ENCODE measurements at regions of chr6 and their contacts with region 1.

Region 1: DNA sequence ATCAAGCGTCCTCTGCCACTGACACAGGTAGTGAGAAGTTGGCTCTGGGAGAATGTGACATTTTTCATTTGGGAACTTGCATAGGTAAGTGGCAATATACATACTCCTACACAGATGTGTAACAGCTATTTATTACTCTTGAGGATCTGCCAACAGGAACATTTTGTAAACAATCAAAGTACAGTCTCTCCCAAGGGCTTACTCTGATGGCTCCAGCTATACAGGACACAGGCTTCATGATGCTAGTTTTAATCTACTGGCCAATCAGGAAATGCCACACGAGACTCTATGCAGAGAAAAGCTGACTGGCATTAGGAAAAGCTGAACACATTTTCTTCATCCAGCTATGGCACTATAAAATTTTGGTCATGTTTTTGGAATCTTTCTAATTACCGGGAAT is 57.8 kb downstream of the POPDC3 start:
- DNase-seq: no peak
- H3K4me3 Mint-ChIP-seq: no peak overlapping the region
- H3K27ac Mint-ChIP-seq: no peak overlapping the region
- H3K4me1 Mint-ChIP-seq: no peaks in the 10 kb centered on the region
- H3K27me3 Mint-ChIP-seq: no peaks in the 10 kb centered on the region

Region 2: GRCh38 chr6:105051896-105052471 is 70.0 kb before region 1 on chr6:
- CTCF ChIA-PET with region 1: no interaction called
- POLR2A ChIA-PET with region 1: no interaction called
- intact Hi-C with region 1: loop called (anchors 2 kb)
- DNase-seq: no peak
- H3K4me3 Mint-ChIP-seq: no peak overlapping the region
- H3K27ac Mint-ChIP-seq: no peak overlapping the region
- H3K4me1 Mint-ChIP-seq: no peaks in the 10 kb centered on the region
- H3K27me3 Mint-ChIP-seq: peaks cover 6% of the 10 kb centered on the region

Region 3: DNA sequence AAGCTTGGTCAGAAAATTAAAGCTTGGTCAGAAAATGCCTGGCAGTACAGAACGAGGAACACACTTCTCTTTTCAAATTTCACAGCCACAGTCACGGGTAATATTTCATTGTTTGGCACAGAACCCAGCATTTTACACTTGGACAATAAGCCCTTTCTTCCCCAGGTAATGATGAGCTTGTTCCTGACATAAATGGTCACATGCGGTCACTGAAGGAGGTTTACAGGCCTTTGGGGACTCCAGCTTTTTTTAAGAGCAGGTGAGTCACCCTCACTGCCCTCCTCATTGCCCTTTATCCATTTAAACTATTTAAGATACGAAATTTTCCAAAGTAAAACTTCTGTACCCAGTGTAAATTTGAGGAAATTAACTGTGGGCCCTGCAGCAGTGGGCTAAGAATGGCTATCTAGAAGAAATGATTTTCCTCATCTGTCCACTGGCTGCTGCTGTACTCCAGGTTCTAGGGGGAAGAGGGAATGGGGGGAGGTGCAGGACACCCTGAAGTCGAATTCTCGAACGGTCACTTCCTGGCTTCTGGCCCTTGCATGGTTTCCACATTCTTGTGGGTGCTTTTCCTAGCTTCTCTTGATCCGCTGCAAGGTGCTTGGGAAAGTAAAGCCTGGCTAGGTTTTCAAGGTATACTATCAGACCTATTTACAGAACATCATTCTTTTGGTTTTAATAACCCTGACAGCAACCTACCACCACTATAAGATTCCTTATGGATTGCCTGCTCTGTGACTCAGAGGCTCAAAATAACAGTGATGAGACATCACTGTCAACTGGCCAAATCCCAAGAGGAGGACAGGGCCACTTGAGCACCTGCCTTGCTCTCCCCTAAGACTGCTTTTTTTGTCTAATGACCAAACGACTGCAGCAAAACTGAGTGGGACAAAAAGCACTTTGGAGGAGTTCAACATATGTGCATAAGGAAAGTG is 205.1 kb after region 1 on chr6:
- CTCF ChIA-PET with region 1: no interaction called
- POLR2A ChIA-PET with region 1: no interaction called
- intact Hi-C with region 1: no loop called
- DNase-seq: no peak
- H3K4me3 Mint-ChIP-seq: no peak overlapping the region
- H3K27ac Mint-ChIP-seq: no peak overlapping the region
- H3K4me1 Mint-ChIP-seq: peaks cover 5% of the 10 kb centered on the region
- H3K27me3 Mint-ChIP-seq: no peaks in the 10 kb centered on the region